ENCODE measurements at regions of chr5 and their contacts with region 1.

Region 1: DNA sequence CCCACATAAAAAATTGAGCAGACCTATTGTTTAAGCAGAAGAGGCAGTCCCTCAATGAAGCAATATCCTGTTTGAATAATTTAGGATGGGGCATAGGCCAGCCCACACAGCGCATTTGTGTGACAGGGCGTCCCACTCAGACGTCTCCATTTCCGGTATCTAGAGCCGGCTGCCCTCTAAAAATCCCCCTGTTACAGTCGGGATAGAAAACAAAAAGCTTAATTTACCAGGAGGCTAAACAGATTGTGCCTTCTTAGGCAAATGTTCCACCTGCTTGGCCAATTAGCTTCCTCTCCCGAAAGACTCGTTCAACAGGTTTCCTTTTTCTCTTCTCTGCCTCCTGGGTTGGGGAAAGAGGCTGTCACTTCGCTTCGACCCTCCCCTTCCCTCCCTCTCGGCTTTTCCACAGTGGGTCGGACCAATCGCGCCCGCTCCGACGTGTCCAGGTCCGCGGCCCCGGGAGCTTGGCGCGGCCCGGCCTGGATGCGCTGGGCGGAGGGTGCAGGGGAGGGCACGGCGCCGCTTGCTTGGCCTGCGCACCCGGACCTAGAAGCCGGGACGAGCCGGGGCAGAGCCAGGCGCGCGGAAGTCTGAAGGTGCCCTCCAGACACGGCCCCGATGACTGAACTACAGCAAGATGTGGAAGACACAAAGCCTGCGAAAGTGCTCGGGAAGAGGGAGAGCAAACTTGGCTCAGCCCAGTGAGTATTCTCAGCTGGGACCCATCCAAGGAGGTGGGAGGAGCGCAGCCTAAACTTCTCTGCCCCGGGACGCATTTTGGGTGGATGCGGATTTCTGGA is at the start of gene GRAMD2B:
- DNase-seq: peak; percentile 89
- H3K4me3 Mint-ChIP-seq: peak within 1 kb of the TSS; percentile 92
- H3K27ac Mint-ChIP-seq: peak within 1 kb of the TSS; percentile 91
- H3K4me1 Mint-ChIP-seq: peaks cover 26% of the 10 kb centered on the region
- H3K27me3 Mint-ChIP-seq: no peaks in the 10 kb centered on the region
- total RNA-seq, gene GRAMD2B: 9.2 and 10.8 TPM in 2 replicates

Region 2: DNA sequence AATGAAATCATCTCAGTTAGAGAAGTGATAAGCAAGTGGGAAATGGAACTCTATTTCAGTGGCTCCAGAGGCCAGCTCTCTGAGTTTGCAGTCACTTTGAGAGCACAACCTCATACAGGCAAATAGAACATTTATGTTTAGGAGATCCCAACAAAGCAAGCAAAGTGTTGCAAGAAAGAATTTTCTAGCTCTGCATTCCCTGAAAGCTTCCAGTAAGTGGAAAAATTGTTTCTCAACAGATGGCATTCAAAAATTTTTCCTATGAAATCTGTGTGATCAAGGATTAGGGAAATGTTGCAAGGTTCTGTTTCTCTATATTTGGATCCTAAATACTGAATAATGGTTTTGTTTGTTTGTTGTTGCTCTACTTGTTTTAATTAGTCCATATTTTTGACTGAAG is 912.5 kb before region 1 on chr5:
- intact Hi-C with region 1: no loop called
- DNase-seq: no peak
- H3K4me3 Mint-ChIP-seq: no peak overlapping the region
- H3K27ac Mint-ChIP-seq: no peak overlapping the region
- H3K4me1 Mint-ChIP-seq: no peaks in the 10 kb centered on the region
- H3K27me3 Mint-ChIP-seq: no peaks in the 10 kb centered on the region

Region 3: DNA sequence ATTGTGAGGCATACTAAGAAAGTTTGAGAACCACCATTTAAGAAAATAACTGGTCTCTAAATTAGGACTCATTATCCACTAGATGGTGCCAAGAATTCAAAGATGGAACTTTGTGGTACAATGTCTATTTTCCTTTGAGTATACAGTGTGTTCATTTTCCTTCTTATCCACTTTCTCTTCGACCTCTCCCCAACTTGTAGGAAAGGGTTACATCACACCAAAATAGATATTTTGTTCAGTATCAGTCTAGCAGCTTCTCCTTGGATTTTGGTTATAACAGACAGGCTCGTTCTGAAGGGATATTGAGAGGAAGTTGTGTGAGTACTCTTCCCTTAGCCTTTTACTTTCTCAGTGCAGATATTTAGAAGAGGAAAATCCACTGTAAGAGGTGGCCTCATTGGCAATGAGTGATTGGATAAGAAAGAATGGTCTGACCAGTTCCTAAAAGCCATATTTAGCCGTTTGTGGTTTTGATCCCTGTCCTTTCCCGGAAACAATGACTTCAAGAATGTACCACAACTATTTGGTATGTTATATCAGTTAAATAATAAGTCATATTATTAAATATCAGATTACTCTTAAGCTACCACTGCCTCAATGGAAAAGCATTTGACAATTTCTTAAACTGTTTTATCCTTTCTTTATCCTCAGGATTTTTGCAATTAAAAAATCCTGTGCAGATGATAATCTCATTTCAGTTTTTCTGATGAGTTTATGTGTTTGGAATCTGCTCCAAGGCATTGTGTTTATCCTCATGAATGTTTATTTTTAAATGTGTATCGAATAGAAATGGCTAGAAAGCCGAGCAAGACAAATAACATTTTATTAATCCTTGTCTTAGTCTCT is 69.0 kb before region 1 on chr5:
- intact Hi-C with region 1: loop called (anchors 5 kb)
- DNase-seq: no peak
- H3K4me3 Mint-ChIP-seq: no peak overlapping the region
- H3K27ac Mint-ChIP-seq: no peak overlapping the region
- H3K4me1 Mint-ChIP-seq: peaks cover 7% of the 10 kb centered on the region
- H3K27me3 Mint-ChIP-seq: peaks cover 3% of the 10 kb centered on the region

Region 4: GRCh38 chr5:126438267-126438666 is 15.1 kb after region 1 on chr5:
- intact Hi-C with region 1: loop called (anchors 1 kb)
- DNase-seq: no peak
- H3K4me3 Mint-ChIP-seq: no peak overlapping the region
- H3K27ac Mint-ChIP-seq: peak overlapping the region; percentile 54
- H3K4me1 Mint-ChIP-seq: peaks cover 17% of the 10 kb centered on the region
- H3K27me3 Mint-ChIP-seq: no peaks in the 10 kb centered on the region

Region 5: GRCh38 chr5:126449751-126450271 is 26.6 kb after region 1 on chr5:
- intact Hi-C with region 1: loop called (anchors 1 kb)
- DNase-seq: peak; percentile 88
- H3K4me3 Mint-ChIP-seq: peak overlapping the region; percentile 91
- H3K27ac Mint-ChIP-seq: peak overlapping the region; percentile 100
- H3K4me1 Mint-ChIP-seq: peaks cover 57% of the 10 kb centered on the region
- H3K27me3 Mint-ChIP-seq: no peaks in the 10 kb centered on the region

Region 6: GRCh38 chr5:126499853-126500342 is 76.7 kb after region 1 on chr5:
- intact Hi-C with region 1: loop called (anchors 5 kb)
- DNase-seq: peak; percentile 80
- H3K4me3 Mint-ChIP-seq: no peak overlapping the region
- H3K27ac Mint-ChIP-seq: no peak overlapping the region
- H3K4me1 Mint-ChIP-seq: peaks cover 4% of the 10 kb centered on the region
- H3K27me3 Mint-ChIP-seq: no peaks in the 10 kb centered on the region